Calu3 (cell line): ENCODE measurements at regions of chr1 and their contacts with region 1.

Region 1: DNA sequence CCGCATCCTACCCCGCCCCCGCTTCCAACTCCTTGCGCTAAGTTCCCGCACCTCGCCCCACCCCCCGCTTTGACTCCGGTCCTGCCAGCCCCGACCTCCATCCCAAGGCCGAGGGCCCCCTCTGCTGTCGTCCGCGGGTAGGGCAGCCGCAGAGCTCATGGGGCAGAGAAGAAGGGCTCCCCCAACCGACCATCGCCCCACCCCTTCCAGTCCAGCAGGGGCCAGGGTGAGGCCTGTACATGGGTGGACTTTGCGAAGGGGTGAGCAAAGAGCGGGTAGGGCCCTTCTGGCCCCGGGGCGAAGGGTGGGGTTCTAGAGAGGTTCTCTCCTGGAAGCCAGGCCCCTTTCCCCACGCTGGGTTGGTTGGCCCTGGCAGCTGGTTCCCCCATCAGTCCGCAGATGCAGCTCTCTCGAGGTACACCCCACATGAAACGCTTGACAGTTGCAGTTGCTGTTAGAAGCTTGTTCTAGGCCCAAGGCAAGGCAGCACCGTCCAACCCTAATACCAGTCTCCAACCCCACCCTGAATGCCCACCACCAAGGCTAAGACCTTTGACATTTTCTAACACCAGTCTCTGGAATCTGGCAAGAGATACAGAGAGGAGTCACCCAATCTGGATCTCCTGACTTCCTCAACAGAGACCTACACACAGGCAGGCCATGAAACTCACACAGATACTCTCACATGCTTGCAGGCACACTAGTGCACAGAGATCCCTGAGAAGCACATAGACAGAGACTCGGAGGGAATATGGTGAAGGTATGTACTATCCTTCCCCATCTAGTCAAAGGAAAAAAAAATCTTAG is 25.3 kb upstream of the ADGRB2 start:
- DNase-seq: peak; percentile 99
- H3K4me3 Mint-ChIP-seq: peak overlapping the region; percentile 73
- H3K27ac Mint-ChIP-seq: peak overlapping the region; percentile 80
- H3K4me1 Mint-ChIP-seq: peaks cover 10% of the 10 kb centered on the region
- H3K27me3 Mint-ChIP-seq: no peaks in the 10 kb centered on the region
- CTCF ChIP-seq: peak; percentile 87

Region 2: GRCh38 chr1:31644560-31645273 is 144.7 kb before region 1 on chr1 and contains the start of gene PEF1:
- CTCF ChIA-PET with region 1: interaction called, 15 read pairs
- intact Hi-C with region 1: no loop called
- DNase-seq: peak; percentile 99
- H3K4me3 Mint-ChIP-seq: peak within 1 kb of the TSS; percentile 96
- H3K27ac Mint-ChIP-seq: peak within 1 kb of the TSS; percentile 99
- H3K4me1 Mint-ChIP-seq: peaks cover 20% of the 10 kb centered on the region
- H3K27me3 Mint-ChIP-seq: peaks cover 22% of the 10 kb centered on the region
- CTCF ChIP-seq: no peak
- total RNA-seq, gene PEF1: 61.5 and 65.2 TPM in 2 replicates

Region 3: GRCh38 chr1:31669786-31670592 is 119.5 kb before region 1 on chr1:
- CTCF ChIA-PET with region 1: interaction called, 21 read pairs
- intact Hi-C with region 1: loop called (anchors 1 kb)
- DNase-seq: peak; percentile 83
- H3K4me3 Mint-ChIP-seq: peak overlapping the region; percentile 64
- H3K27ac Mint-ChIP-seq: peak overlapping the region; percentile 52
- H3K4me1 Mint-ChIP-seq: peaks cover 34% of the 10 kb centered on the region
- H3K27me3 Mint-ChIP-seq: peaks cover 36% of the 10 kb centered on the region
- CTCF ChIP-seq: peak; percentile 32

Region 4: GRCh38 chr1:31715087-31715872 is 74.2 kb before region 1 on chr1:
- CTCF ChIA-PET with region 1: interaction called, 13 read pairs
- intact Hi-C with region 1: loop called (anchors 2 kb)
- DNase-seq: peak; percentile 82
- H3K4me3 Mint-ChIP-seq: peak overlapping the region; percentile 76
- H3K27ac Mint-ChIP-seq: peak overlapping the region; percentile 51
- H3K4me1 Mint-ChIP-seq: peaks cover 23% of the 10 kb centered on the region
- H3K27me3 Mint-ChIP-seq: peaks cover 45% of the 10 kb centered on the region
- CTCF ChIP-seq: peak; percentile 83

Region 5: DNA sequence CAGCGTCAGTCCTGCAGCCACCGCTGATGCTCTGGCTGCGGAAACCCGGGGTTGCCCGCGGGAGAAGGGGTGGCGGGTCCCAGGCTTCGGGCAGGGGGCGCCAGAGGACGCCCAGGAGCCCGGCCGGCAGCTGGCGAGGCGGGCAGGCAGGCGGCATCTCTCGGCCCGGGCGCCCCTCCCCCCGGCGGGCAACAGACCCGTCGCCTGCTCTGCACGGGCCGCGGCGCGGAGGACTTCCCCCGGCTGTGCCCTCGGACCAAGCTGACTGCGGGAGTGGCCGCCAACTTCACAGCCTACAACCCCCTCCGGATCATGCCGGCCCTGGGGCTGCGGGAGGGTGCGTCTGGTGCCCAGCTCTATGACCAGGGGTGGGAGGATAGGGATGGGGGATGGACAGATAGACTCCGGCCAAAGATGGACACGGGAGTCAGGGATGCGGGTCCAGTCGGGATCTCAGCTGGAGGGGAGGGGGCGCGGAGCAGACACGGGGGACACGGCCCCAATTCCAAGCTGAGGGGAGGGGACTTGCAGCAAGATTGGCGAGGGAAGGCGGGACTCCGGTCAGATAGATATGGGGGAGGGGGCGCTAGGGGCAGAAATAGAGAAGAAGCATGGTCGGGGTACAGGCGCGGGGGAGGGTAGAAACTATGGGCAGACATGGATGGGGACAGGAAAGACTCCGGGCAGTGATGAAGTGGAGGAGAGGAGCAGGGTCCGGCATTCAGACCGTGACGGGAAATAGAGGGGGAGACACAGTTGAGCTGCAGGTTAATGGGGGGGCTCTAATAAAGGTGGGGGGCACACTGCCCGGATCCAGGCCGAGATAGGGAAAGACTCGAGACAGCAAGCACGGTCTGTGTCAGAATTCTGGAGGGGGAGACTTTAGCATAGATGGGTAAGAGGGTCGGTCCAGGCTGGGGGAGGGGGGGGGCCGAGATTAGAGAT is 26.5 kb before region 1 on chr1:
- CTCF ChIA-PET with region 1: interaction called, 19 read pairs
- intact Hi-C with region 1: no loop called
- DNase-seq: peak; percentile 92
- H3K4me3 Mint-ChIP-seq: peak overlapping the region; percentile 75
- H3K27ac Mint-ChIP-seq: no peak overlapping the region
- H3K4me1 Mint-ChIP-seq: peaks cover 16% of the 10 kb centered on the region
- H3K27me3 Mint-ChIP-seq: peaks cover 70% of the 10 kb centered on the region
- CTCF ChIP-seq: peak; percentile 79